Ovary (tissue), 10 donors: ENCODE measurements at regions of chr5 and their contacts with region 1.

Region 1: DNA sequence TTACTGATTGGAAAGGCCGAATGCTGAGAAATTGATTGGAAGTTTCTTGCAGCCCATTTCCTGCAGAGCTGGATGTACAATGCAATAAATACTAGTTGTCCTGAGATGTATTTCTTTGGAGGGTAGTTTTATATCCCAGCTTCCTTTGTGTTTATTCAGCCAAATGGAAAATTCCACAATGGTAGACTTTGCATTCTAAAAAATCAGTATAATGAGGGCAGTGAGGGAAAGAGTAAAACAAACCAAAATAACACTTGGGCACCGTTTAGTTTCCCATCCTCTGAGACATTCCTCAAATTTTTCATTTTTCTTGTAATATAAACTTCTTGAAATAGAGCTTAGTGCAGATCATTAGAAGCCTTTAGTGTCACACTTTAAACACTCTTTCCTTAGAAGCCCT is 379.4 kb downstream of the EBF1 start:
- DNase-seq: no peak
- H3K4me3 ChIP-seq: no peak overlapping the region
- H3K27ac ChIP-seq: no peak overlapping the region
- H3K4me1 ChIP-seq: peaks cover 6% of the 10 kb centered on the region
- H3K27me3 ChIP-seq: no peaks in the 10 kb centered on the region
- CTCF ChIP-seq: no peak
- EP300 ChIP-seq: no peak
- POLR2A ChIP-seq: no peak

Region 2: DNA sequence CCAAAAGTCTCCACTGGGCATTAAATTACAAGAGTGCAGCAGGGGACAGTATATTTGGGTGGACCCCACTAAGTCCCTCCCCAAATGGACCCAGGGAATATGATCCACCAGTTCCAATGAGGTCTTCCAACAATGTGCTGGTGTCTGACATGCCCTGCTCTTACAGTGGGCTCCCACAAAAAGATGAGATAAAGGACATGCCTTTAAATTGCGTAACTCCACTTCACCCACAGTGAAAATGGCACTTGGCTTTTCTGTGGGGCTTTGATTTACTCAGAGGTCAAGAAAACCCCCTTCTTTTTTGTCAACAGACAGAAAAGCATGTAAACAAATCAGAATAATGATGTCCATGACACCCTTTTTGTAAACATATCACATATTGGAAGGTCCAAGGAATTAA is 42.9 kb after region 1 on chr5:
- intact Hi-C with region 1: loop called in 1 of 4 experiments (anchors 2 kb)
- DNase-seq: no peak
- H3K4me3 ChIP-seq: no peak overlapping the region
- H3K27ac ChIP-seq: no peak overlapping the region
- H3K4me1 ChIP-seq: no peaks in the 10 kb centered on the region
- H3K27me3 ChIP-seq: no peaks in the 10 kb centered on the region
- CTCF ChIP-seq: no peak
- EP300 ChIP-seq: no peak
- POLR2A ChIP-seq: no peak